Endothelial cell of umbilical vein (primary cell): ENCODE measurements at regions of chr15 and their contacts with region 1.

Region 1: DNA sequence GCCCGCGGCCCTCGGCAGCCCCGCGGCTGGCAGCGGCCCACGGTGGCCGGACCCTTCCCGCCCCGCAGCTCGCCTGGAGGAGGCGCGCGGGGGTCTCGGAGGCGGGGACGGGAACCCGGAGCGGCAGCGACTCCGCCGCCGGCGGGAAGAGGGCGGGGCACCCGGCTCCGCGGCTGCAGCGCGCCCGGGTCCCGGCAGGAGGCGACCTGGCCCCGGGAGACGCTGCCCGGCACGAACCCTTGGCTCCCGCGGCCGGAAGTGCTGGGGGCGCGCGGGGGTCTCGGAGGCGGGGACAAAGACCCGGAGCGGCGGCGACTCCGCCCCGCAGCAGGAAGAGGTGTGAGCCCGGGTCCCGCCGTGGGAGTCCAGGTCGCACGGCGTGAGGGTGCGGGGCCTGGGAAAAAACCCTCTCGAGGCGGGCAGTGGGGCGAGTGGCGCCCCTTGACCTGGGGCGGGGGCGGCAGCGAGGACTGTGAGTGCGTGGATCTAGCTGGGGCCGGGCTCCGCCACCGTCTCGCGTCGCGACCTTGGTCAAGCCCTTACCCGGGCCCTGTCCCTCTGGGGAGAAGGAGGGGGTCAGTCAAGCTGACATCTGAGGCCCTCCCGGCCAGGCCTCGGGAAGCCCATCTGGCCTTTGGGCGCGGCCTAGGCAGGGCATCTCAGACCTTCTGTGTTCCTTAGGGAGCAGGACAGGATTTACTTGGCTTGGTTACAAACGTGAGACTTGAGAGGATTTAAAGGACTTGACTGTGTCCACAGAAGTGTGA is at the start of gene CIB2:
- DNase-seq: peak; percentile 64
- H3K4me3 ChIP-seq: peak within 1 kb of the TSS; percentile 43 to 71 (median 68)
- H3K27ac ChIP-seq: no peak within 1 kb of the TSS
- H3K4me1 ChIP-seq: peaks cover 7% of the 10 kb centered on the region
- H3K27me3 ChIP-seq: no peaks in the 10 kb centered on the region
- CTCF ChIP-seq: peak; percentile 58 to 61
- POLR2A ChIP-seq: no peak
- total RNA-seq, gene CIB2: 2.5 and 4.0 TPM in 2 replicates

Region 2: DNA sequence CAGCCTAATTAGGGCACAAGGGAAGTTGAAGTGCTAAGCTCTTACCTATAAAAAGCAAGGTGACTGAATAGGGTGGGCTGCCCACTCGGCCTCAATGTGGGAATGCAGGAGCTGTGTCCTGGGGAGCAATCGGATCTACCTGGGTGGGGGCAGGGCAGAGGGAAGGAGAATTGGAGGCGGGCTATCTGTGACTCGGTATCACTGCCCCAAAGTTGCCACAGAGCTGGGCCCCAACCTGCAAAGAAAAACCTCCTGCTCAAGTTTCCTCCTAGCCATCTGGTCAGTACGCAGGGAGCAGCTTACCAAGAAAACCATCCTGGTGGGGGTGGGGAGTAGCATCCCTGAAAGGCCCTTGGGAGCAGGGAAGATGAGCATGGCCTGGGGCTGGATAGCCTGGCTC is 11.0 kb before region 1 on chr15:
- CTCF ChIA-PET with region 1: interaction called, 11 read pairs
- POLR2A ChIA-PET with region 1: no interaction called
- dilution Hi-C with region 1: no loop called
- intact Hi-C with region 1: no loop called
- DNase-seq: no peak
- H3K4me3 ChIP-seq: no peak overlapping the region
- H3K27ac ChIP-seq: no peak overlapping the region
- H3K4me1 ChIP-seq: no peaks in the 10 kb centered on the region
- H3K27me3 ChIP-seq: no peaks in the 10 kb centered on the region
- CTCF ChIP-seq: no peak
- POLR2A ChIP-seq: no peak

Region 3: DNA sequence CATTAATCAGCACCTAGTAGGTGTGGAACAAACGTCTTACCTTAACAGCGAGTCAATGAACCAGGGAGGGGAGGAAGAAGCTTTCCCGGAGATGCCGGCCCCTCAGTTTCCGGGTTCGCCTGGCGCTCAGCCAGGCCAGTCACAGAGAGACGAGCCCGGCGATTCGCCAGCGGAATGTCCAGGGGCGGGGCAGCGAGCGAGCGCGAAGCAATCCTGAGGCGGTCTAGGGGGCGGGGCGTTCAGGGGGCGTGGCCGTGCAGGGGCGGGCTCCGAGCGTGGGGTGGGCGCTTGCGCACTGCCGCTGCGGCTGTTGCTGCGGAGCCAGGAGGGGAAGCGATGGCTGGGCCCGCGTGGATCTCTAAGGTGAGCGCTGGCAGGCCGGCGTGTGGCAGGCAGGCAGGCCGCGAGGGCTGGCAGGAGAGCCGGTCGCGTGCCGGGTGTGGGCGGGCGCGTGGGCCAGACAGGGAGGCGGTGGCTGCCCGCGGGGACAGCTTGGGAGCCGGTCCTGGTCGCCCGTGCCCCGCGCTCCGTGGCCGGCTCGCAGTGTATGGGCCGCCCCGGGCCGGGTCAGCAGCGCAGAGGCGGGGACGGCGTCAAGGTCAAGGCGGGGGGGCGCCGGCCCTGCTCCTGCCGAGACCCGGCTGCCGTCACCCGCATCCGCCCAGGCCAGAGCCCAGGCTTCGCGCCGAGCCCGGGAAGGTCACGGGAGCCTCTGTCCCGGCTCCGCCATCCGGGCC is 17.8 kb after region 1 on chr15 and contains the start of gene IDH3A:
- CTCF ChIA-PET with region 1: interaction called, 26 read pairs
- POLR2A ChIA-PET with region 1: no interaction called
- dilution Hi-C with region 1: no loop called
- intact Hi-C with region 1: loop called (anchors 1 kb)
- DNase-seq: peak; percentile 95
- H3K4me3 ChIP-seq: peak within 1 kb of the TSS; percentile 54 to 94 (median 71)
- H3K27ac ChIP-seq: peak within 1 kb of the TSS; percentile 81
- H3K4me1 ChIP-seq: peaks cover 11% of the 10 kb centered on the region
- H3K27me3 ChIP-seq: no peaks in the 10 kb centered on the region
- CTCF ChIP-seq: no peak
- POLR2A ChIP-seq: peak; percentile 64
- total RNA-seq, gene IDH3A: 62.8 and 63.9 TPM in 2 replicates